Naive thymus-derived CD4-positive, alpha-beta T cell (primary cell): ENCODE measurements at regions of chr17 and their contacts with region 1.

Region 1: DNA sequence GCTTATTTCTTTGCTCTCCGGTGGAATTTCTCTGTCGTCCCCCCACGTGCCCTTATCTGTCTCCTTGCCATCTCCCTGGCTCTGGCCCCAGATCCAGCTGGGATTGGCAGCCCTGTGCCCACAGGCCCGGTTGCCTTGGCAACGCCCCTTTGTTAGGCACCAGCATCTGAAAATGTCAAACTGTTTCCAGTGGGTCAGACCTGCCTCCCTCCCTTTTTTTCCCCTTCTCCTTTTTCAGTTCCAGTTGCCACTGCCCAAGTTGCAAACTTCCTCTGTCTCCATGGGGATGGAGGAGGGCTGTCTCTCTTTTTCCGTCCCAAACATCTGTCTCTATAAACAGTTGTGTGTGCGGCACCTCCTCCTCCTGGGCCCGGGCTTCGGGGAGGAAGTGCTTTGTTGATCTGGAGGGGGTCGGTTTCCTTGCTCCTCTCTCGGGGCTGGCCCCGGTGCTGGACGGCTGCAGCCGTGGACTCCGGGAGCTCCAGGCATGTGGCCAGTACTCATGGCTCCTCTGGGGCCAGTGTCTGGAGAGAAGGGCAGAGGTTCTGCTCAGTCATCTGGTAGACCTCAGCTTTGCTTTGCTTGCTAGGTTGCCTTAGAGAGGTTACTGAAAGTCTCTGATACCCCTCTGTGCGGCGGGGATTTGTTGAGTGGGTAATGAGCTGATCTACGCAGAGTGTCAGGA is 35.3 kb downstream of the SOCS3 start:
- DNase-seq: peak in 5 of 9 donors; percentile 32 to 42 (median 35)
- ATAC-seq: peak; percentile 54
- H3K4me3 ChIP-seq: no peak overlapping the region
- H3K4me3 Mint-ChIP-seq: peak overlapping the region; percentile 29 to 74 (median 60)
- H3K27ac ChIP-seq: peak overlapping the region; percentile 31
- H3K27ac Mint-ChIP-seq: peak overlapping the region; percentile 73 to 96 (median 82)
- H3K4me1 ChIP-seq: peaks cover 13 to 16% of the 10 kb centered on the region in 2 donors
- H3K4me1 Mint-ChIP-seq: peaks cover 16 to 32% (median 26%) of the 10 kb centered on the region in 7 donors
- H3K27me3 ChIP-seq: no peaks in the 10 kb centered on the region
- H3K27me3 Mint-ChIP-seq: no peaks in the 10 kb centered on the region

Region 2: DNA sequence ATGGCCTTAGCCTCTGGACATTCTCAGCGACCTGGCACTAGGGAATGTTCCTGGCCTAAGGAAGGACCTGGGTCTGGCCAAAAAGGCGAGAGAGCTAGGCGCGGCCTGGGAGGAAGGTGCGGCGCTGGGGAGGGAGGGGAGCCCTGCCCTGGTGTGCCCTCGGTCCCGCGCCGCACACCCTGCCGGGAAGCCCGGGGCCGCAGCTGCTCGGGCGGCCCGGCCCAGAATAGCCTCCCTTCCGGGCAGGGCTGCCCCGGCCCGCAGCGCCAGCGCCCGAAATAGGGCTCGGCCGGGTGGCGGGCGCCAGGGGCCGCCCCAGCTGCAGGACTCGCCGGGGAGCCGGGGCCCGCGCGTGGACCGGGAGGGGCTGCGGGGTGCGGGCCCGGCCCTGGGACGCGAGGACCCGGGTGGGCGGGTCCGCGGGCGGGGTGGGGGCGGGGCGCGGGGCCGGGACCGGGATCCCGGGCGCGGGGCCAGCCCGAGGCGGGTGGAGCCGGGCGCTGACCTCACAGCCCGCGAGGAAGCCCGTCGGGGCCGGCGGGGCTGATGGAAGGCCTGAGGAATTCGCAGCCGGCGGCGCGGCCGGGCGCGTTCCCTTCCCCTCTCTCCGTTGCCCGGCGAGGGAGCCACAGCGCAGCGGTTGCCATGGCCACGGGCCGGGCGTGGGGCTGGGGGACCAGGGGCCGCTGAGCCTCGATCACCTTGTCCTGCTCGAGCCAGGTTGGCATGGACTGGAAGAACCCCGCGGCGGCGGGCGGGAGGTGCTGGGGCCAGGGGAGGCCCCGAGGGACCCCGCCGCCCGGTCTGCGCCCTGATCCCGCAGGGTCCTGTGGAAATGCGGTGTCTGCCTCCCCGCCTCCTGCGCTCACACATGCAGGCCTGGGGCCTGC is 17.3 kb after region 1 on chr17:
- CTCF ChIA-PET with region 1: interaction called, 3 read pairs
- POLR2A ChIA-PET with region 1: interaction called, 11 read pairs
- intact Hi-C with region 1: loop called in 1 of 2 experiments (anchors 1 kb)
- DNase-seq: peak in 2 of 9 donors; percentile 28 to 48
- ATAC-seq: peak; percentile 15
- H3K4me3 ChIP-seq: peak overlapping the region; percentile 24
- H3K4me3 Mint-ChIP-seq: peak overlapping the region in 8 of 10 donors; percentile 53 to 85 (median 72)
- H3K27ac ChIP-seq: peak overlapping the region; percentile 82
- H3K27ac Mint-ChIP-seq: peak overlapping the region in 5 of 9 donors; percentile 32 to 98 (median 97)
- H3K4me1 ChIP-seq: peaks cover 43 to 67% of the 10 kb centered on the region in 2 donors
- H3K4me1 Mint-ChIP-seq: peaks cover 54 to 75% (median 62%) of the 10 kb centered on the region in 7 donors
- H3K27me3 ChIP-seq: no peaks in the 10 kb centered on the region
- H3K27me3 Mint-ChIP-seq: peaks cover 0 to 15% (median 0%) of the 10 kb centered on the region in 5 donors